Right ventricle myocardium inferior (tissue), 1 donor: ENCODE measurements at regions of chr16 and their contacts with region 1.

Region 1: DNA sequence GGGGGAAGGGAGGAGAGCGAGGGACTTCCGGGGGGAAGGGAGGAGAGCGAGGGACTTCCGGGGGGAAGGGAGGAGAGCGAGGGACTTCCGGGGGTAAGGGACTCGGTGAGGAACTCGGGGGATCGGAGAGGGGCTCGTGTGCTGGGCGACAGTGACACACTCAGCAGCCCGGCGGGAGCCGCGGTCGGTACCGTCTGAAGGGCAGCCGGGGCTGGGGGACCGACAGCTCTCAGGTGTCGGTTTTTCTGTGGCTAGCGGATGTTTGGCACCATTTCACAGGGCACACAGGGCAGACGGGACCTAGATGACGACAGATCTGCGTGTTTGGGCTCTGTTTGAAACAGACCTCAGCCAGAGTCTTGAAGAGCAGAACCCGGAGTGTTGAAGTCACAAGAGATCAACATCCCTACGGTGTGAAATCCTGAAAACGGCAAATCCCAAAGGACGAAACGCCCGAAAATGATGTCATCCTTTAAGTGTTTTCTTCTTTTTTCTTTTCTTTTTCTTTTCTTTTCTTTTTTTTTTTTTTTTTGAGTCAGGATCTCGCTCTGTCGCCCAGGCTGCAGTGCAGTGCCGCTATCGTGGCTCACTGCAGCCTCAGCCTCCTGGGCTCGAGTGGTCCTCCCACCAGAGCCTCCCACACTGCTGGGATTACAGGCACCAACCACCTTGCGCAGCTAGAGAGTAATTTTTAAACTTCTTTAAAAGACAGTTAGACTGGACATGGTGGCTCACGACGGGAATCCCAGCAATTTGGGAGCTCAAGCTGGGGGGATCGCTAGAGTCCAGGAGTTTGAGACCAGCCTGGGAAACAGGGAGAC is 23.9 kb downstream of the ZNF778 start:
- DNase-seq: peak; percentile 86
- ATAC-seq: peak; percentile 74

Region 2: GRCh38 chr16:89289428-89290395 is 48.3 kb after region 1 on chr16:
- intact Hi-C with region 1: loop called (anchors 5 kb)
- DNase-seq: peak; percentile 84
- ATAC-seq: peak; percentile 72

Region 3: GRCh38 chr16:89641458-89642119 is 400.2 kb after region 1 on chr16:
- intact Hi-C with region 1: loop called (anchors 10 kb)
- DNase-seq: peak; percentile 30
- ATAC-seq: no peak